ENCODE measurements at regions of chr2 and their contacts with region 1.

Region 1: DNA sequence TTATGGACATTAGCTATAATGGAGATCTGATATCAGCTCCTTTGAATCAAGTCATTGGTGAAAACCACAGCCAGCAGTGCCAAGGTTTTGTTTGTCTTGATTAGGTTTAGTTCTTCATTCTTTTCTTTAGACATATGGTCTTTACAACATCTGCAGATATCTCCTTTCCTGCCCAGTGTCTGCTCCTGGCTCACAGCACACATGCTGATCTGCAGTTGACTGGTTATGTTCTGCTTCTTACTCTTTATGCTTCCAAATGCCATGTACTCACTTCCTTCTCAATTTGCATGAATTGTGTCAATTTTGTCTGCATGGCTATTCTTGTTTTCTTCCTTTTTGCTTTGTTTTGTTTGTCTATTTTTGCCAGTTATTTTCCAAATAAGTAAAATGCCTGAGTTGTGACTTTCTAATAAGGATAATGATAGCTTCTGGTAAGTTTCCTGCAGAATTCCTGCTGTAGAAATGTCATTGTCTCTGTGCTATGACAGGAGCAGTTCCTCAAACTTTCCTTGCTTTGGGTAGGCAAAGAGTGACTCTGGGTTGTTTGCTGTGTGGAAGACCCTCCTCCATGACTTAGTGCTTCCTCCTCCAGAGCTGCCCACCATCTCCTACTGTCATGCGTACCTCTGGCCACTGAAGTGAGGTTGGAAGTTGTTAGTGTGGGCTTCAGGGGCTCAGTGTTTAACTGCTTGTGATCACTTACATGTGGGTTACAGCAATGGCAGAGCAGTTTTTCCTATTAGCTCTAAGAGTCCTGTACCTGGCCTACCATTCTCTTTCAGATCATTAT is 8.2 kb downstream of the ARHGAP25 start:
- DNase-seq: no peak
- ATAC-seq: no peak
- H3K4me3 ChIP-seq: peak overlapping the region; percentile 27
- H3K4me3 Mint-ChIP-seq: peak overlapping the region in 8 of 10 donors; percentile 43 to 82 (median 67)
- H3K27ac ChIP-seq: peak overlapping the region; percentile 5
- H3K27ac Mint-ChIP-seq: peak overlapping the region in 8 of 9 donors; percentile 42 to 87 (median 76)
- H3K4me1 ChIP-seq: peaks cover 93% of the 10 kb centered on the region in 2 donors
- H3K4me1 Mint-ChIP-seq: peaks cover 69 to 98% (median 93%) of the 10 kb centered on the region in 7 donors
- H3K27me3 ChIP-seq: no peaks in the 10 kb centered on the region
- H3K27me3 Mint-ChIP-seq: no peaks in the 10 kb centered on the region

Region 2: DNA sequence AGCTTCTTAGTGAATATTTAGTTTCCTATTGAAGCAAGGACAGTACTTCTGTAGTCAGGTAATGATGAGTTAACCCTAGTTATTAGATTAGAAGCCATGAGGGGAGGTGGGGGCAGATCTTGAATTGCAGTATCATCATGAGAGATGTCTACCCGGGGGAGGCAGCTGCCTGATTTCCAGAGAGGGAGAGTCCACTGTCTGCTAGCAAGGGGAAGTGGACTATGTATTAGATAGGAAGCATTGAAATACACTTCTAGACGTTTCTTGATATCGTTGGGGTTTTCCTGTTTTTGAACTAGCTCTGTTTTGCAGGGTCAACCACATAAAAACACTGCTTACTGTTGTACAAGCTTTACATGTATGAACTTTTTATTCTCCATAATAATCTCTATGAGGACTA is 236.7 kb before region 1 on chr2:
- CTCF ChIA-PET with region 1: no interaction called
- POLR2A ChIA-PET with region 1: no interaction called
- intact Hi-C with region 1: no loop called
- DNase-seq: no peak
- ATAC-seq: peak; percentile 60
- H3K4me3 ChIP-seq: no peak overlapping the region
- H3K4me3 Mint-ChIP-seq: peak overlapping the region; percentile 4 to 57 (median 29)
- H3K27ac ChIP-seq: no peak overlapping the region
- H3K27ac Mint-ChIP-seq: peak overlapping the region in 3 of 9 donors; percentile 5 to 51 (median 38)
- H3K4me1 ChIP-seq: peaks cover 9 to 12% of the 10 kb centered on the region in 2 donors
- H3K4me1 Mint-ChIP-seq: peaks cover 9 to 24% (median 17%) of the 10 kb centered on the region in 7 donors
- H3K27me3 ChIP-seq: no peaks in the 10 kb centered on the region
- H3K27me3 Mint-ChIP-seq: no peaks in the 10 kb centered on the region

Region 3: GRCh38 chr2:68721482-68722101 is 21.2 kb before region 1 on chr2:
- CTCF ChIA-PET with region 1: interaction called, 16 read pairs
- POLR2A ChIA-PET with region 1: interaction called, 40 read pairs
- intact Hi-C with region 1: no loop called
- DNase-seq: peak in 7 of 9 donors; percentile 52 to 69 (median 61)
- ATAC-seq: peak; percentile 83
- H3K4me3 ChIP-seq: peak overlapping the region; percentile 9
- H3K4me3 Mint-ChIP-seq: peak overlapping the region; percentile 76 to 91 (median 82)
- H3K27ac ChIP-seq: peak overlapping the region; percentile 68
- H3K27ac Mint-ChIP-seq: peak overlapping the region; percentile 78 to 97 (median 95)
- H3K4me1 ChIP-seq: peaks cover 72 to 87% of the 10 kb centered on the region in 2 donors
- H3K4me1 Mint-ChIP-seq: peaks cover 65 to 96% (median 93%) of the 10 kb centered on the region in 7 donors
- H3K27me3 ChIP-seq: no peaks in the 10 kb centered on the region
- H3K27me3 Mint-ChIP-seq: no peaks in the 10 kb centered on the region

Region 4: GRCh38 chr2:68943581-68944568 is 201.1 kb after region 1 on chr2:
- CTCF ChIA-PET with region 1: no interaction called
- POLR2A ChIA-PET with region 1: no interaction called
- intact Hi-C with region 1: no loop called
- DNase-seq: peak; percentile 23 to 62 (median 49)
- ATAC-seq: peak; percentile 74
- H3K4me3 ChIP-seq: no peak overlapping the region
- H3K4me3 Mint-ChIP-seq: no peak overlapping the region
- H3K27ac ChIP-seq: no peak overlapping the region
- H3K27ac Mint-ChIP-seq: peak overlapping the region in 1 of 9 donors; percentile 69
- H3K4me1 ChIP-seq: no peaks in the 10 kb centered on the region
- H3K4me1 Mint-ChIP-seq: peaks cover 0 to 4% (median 0%) of the 10 kb centered on the region in 7 donors
- H3K27me3 ChIP-seq: peaks cover 0 to 4% of the 10 kb centered on the region in 2 donors
- H3K27me3 Mint-ChIP-seq: peaks cover 14 to 67% (median 33%) of the 10 kb centered on the region in 5 donors